ENCODE measurements at regions of chr1 and their contacts with region 1.

Region 1: GRCh38 chr1:160646711-160647328 is at the start of gene SLAMF1:
- DNase-seq: peak in 8 of 9 donors; percentile 45 to 65 (median 52)
- ATAC-seq: peak; percentile 83
- H3K4me3 ChIP-seq: peak within 1 kb of the TSS; percentile 86
- H3K4me3 Mint-ChIP-seq: peak within 1 kb of the TSS; percentile 91 to 100 (median 95)
- H3K27ac ChIP-seq: peak within 1 kb of the TSS; percentile 89
- H3K27ac Mint-ChIP-seq: peak within 1 kb of the TSS; percentile 89 to 95 (median 94)
- H3K4me1 ChIP-seq: peaks cover 26 to 52% of the 10 kb centered on the region in 2 donors
- H3K4me1 Mint-ChIP-seq: peaks cover 46 to 92% (median 74%) of the 10 kb centered on the region in 7 donors
- H3K27me3 ChIP-seq: no peaks in the 10 kb centered on the region
- H3K27me3 Mint-ChIP-seq: no peaks in the 10 kb centered on the region
- total RNA-seq, gene SLAMF1: 18.3 to 90.3 (median 31.9) TPM

Region 2: GRCh38 chr1:160618763-160619274 is 28.0 kb before region 1 on chr1:
- CTCF ChIA-PET with region 1: interaction called, 19 read pairs
- POLR2A ChIA-PET with region 1: interaction called, 13 read pairs
- intact Hi-C with region 1: no loop called
- DNase-seq: peak in 6 of 9 donors; percentile 34 to 49 (median 46)
- ATAC-seq: peak; percentile 83
- H3K4me3 ChIP-seq: no peak overlapping the region
- H3K4me3 Mint-ChIP-seq: peak overlapping the region in 3 of 10 donors; percentile 2 to 46 (median 24)
- H3K27ac ChIP-seq: no peak overlapping the region
- H3K27ac Mint-ChIP-seq: peak overlapping the region; percentile 21 to 83 (median 69)
- H3K4me1 ChIP-seq: peaks cover 23% of the 10 kb centered on the region in 2 donors
- H3K4me1 Mint-ChIP-seq: peaks cover 32 to 84% (median 68%) of the 10 kb centered on the region in 7 donors
- H3K27me3 ChIP-seq: no peaks in the 10 kb centered on the region
- H3K27me3 Mint-ChIP-seq: no peaks in the 10 kb centered on the region

Region 3: GRCh38 chr1:160657250-160657781 is 10.5 kb after region 1 on chr1:
- CTCF ChIA-PET with region 1: interaction called, 3 read pairs
- POLR2A ChIA-PET with region 1: interaction called, 63 read pairs
- intact Hi-C with region 1: loop called in 1 of 2 experiments (anchors 1 kb)
- DNase-seq: peak in 1 of 9 donors; percentile 29
- ATAC-seq: peak; percentile 29
- H3K4me3 ChIP-seq: no peak overlapping the region
- H3K4me3 Mint-ChIP-seq: peak overlapping the region in 9 of 10 donors; percentile 4 to 61 (median 55)
- H3K27ac ChIP-seq: peak overlapping the region; percentile 44
- H3K27ac Mint-ChIP-seq: peak overlapping the region; percentile 7 to 89 (median 83)
- H3K4me1 ChIP-seq: peaks cover under 1 to 60% of the 10 kb centered on the region in 2 donors
- H3K4me1 Mint-ChIP-seq: peaks cover 39 to 96% (median 84%) of the 10 kb centered on the region in 7 donors
- H3K27me3 ChIP-seq: no peaks in the 10 kb centered on the region
- H3K27me3 Mint-ChIP-seq: no peaks in the 10 kb centered on the region

Region 4: GRCh38 chr1:160664573-160665051 is 17.8 kb after region 1 on chr1:
- CTCF ChIA-PET with region 1: interaction called, 3 read pairs
- POLR2A ChIA-PET with region 1: interaction called, 63 read pairs
- intact Hi-C with region 1: loop called in 1 of 2 experiments (anchors 1 kb)
- DNase-seq: peak in 4 of 9 donors; percentile 44 to 59 (median 46)
- ATAC-seq: peak; percentile 84
- H3K4me3 ChIP-seq: peak overlapping the region; percentile 22
- H3K4me3 Mint-ChIP-seq: peak overlapping the region; percentile 53 to 87 (median 76)
- H3K27ac ChIP-seq: peak overlapping the region; percentile 10
- H3K27ac Mint-ChIP-seq: peak overlapping the region; percentile 77 to 96 (median 89)
- H3K4me1 ChIP-seq: peaks cover 44 to 49% of the 10 kb centered on the region in 2 donors
- H3K4me1 Mint-ChIP-seq: peaks cover 52 to 84% (median 71%) of the 10 kb centered on the region in 7 donors
- H3K27me3 ChIP-seq: no peaks in the 10 kb centered on the region
- H3K27me3 Mint-ChIP-seq: no peaks in the 10 kb centered on the region

Region 5: GRCh38 chr1:160704250-160704649 is 57.4 kb after region 1 on chr1:
- CTCF ChIA-PET with region 1: no interaction called
- POLR2A ChIA-PET with region 1: interaction called, 4 read pairs
- intact Hi-C with region 1: loop called in 1 of 2 experiments (anchors 2 kb)
- DNase-seq: no peak
- ATAC-seq: peak; percentile 54
- H3K4me3 ChIP-seq: peak overlapping the region; percentile 7
- H3K4me3 Mint-ChIP-seq: peak overlapping the region in 4 of 10 donors; percentile 43 to 69 (median 67)
- H3K27ac ChIP-seq: peak overlapping the region; percentile 99
- H3K27ac Mint-ChIP-seq: peak overlapping the region in 5 of 9 donors; percentile 19 to 86 (median 81)
- H3K4me1 ChIP-seq: peaks cover 69 to 79% of the 10 kb centered on the region in 2 donors
- H3K4me1 Mint-ChIP-seq: peaks cover 2 to 66% (median 51%) of the 10 kb centered on the region in 7 donors
- H3K27me3 ChIP-seq: no peaks in the 10 kb centered on the region
- H3K27me3 Mint-ChIP-seq: no peaks in the 10 kb centered on the region

Measured in naive thymus-derived CD4-positive, alpha-beta T cell (primary cell).